Caco-2 (cell line): ENCODE measurements at regions of chr3 and their contacts with region 1.

Region 1: GRCh38 chr3:71583566-71584449 is at the start of gene FOXP1:
- DNase-seq: peak; percentile 60 to 64
- H3K4me3 ChIP-seq: peak within 1 kb of the TSS; percentile 77
- H3K4me3 Mint-ChIP-seq: peak within 1 kb of the TSS; percentile 91
- H3K27ac Mint-ChIP-seq: peak within 1 kb of the TSS; percentile 90
- H3K4me1 ChIP-seq: peaks cover 12% of the 10 kb centered on the region
- H3K4me1 Mint-ChIP-seq: peaks cover 18% of the 10 kb centered on the region
- H3K27me3 ChIP-seq: no peaks in the 10 kb centered on the region
- H3K27me3 Mint-ChIP-seq: no peaks in the 10 kb centered on the region
- CTCF ChIP-seq: no peak
- total RNA-seq, gene FOXP1: 131 and 155 TPM in 2 replicates

Region 2: GRCh38 chr3:70550723-70551319 is 1033.0 kb before region 1 on chr3:
- CTCF ChIA-PET with region 1: no interaction called
- POLR2A ChIA-PET with region 1: no interaction called
- intact Hi-C with region 1: loop called (anchors 5 kb)
- DNase-seq: peak; percentile 54 to 61
- H3K4me3 ChIP-seq: no peak overlapping the region
- H3K4me3 Mint-ChIP-seq: no peak overlapping the region
- H3K27ac Mint-ChIP-seq: no peak overlapping the region
- H3K4me1 ChIP-seq: no peaks in the 10 kb centered on the region
- H3K4me1 Mint-ChIP-seq: no peaks in the 10 kb centered on the region
- H3K27me3 ChIP-seq: no peaks in the 10 kb centered on the region
- H3K27me3 Mint-ChIP-seq: peaks cover 15% of the 10 kb centered on the region
- CTCF ChIP-seq: peak; percentile 52 to 63

Region 3: DNA sequence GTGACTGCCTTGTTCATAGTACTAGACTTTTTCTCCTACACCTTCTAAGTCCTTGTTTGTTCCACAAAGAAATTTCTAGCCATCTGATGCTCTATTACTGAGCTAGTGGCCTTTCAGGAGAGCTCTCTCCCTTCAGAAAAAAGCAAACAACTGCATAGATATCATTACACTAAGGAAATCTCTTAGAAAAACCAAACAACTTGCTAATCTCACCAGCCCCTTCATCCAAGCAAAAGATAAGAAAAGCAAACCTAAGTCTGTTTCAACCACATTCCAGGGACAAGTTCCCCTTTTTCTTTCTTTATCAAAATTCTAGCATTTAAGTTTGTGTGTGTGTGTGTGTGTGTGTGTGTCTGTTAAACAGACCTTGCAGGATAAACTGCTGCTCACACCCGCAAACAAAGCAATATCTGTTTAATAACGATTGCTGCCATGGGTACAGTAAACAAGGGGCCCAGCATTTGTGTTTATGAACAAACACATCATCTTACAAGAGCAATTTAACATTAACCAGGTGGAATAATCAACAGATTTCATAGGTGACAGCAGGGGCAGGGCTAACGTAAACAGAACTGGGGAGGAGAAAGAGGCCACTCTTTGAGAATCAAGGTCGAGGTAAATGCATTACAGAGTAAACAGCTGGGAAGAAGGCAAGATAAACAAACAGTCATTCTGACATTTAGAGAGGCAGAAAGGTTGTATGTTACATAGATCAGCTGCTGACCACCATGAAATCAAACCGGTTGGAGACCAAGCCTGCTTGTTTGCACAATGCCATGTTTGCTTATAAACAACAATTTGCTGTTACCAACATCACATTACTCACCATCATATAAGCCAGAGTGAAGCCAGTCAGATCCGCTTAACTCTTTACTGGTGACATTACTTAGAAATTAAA is 375.3 kb before region 1 on chr3:
- CTCF ChIA-PET with region 1: no interaction called
- POLR2A ChIA-PET with region 1: interaction called, 3 read pairs
- intact Hi-C with region 1: loop called (anchors 2 kb)
- DNase-seq: peak; percentile 84 to 88
- H3K4me3 ChIP-seq: no peak overlapping the region
- H3K4me3 Mint-ChIP-seq: peak overlapping the region; percentile 66
- H3K27ac Mint-ChIP-seq: peak overlapping the region; percentile 93
- H3K4me1 ChIP-seq: peaks cover 60% of the 10 kb centered on the region
- H3K4me1 Mint-ChIP-seq: peaks cover 54% of the 10 kb centered on the region
- H3K27me3 ChIP-seq: no peaks in the 10 kb centered on the region
- H3K27me3 Mint-ChIP-seq: no peaks in the 10 kb centered on the region
- CTCF ChIP-seq: no peak

Region 4: GRCh38 chr3:71397046-71397445 is 186.8 kb before region 1 on chr3:
- CTCF ChIA-PET with region 1: no interaction called
- POLR2A ChIA-PET with region 1: no interaction called
- intact Hi-C with region 1: loop called (anchors 5 kb)
- DNase-seq: peak in 1 of 2 experiments; percentile 45
- H3K4me3 ChIP-seq: no peak overlapping the region
- H3K4me3 Mint-ChIP-seq: no peak overlapping the region
- H3K27ac Mint-ChIP-seq: no peak overlapping the region
- H3K4me1 ChIP-seq: peaks cover 32% of the 10 kb centered on the region
- H3K4me1 Mint-ChIP-seq: peaks cover 22% of the 10 kb centered on the region
- H3K27me3 ChIP-seq: no peaks in the 10 kb centered on the region
- H3K27me3 Mint-ChIP-seq: no peaks in the 10 kb centered on the region
- CTCF ChIP-seq: peak; percentile 34 to 50

Region 5: DNA sequence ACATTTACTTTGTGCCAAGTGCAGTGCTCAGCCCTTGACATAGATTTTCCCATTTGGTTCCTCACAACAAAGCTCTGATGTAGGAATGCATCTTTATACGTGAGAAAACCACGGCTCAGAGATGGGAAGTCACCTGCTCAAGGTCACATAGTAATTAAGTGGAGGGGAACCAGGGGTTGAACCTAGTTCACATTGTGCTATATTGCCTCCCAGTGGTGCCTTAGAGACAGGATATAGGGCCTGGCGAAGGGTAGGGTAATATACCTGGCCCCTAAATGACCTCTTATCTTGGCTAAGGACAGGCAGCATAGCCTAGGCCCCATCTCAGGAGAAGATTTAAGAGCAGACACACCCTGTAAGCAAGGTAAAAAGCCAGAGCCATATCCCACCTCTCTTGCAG is 71.8 kb before region 1 on chr3:
- CTCF ChIA-PET with region 1: interaction called, 5 read pairs
- POLR2A ChIA-PET with region 1: no interaction called
- intact Hi-C with region 1: loop called (anchors 2 kb)
- DNase-seq: peak in 1 of 2 experiments; percentile 21
- H3K4me3 ChIP-seq: no peak overlapping the region
- H3K4me3 Mint-ChIP-seq: no peak overlapping the region
- H3K27ac Mint-ChIP-seq: no peak overlapping the region
- H3K4me1 ChIP-seq: peaks cover 9% of the 10 kb centered on the region
- H3K4me1 Mint-ChIP-seq: peaks cover 5% of the 10 kb centered on the region
- H3K27me3 ChIP-seq: no peaks in the 10 kb centered on the region
- H3K27me3 Mint-ChIP-seq: no peaks in the 10 kb centered on the region
- CTCF ChIP-seq: no peak